ENCODE measurements at regions of chr7 and their contacts with region 1.

Region 1: DNA sequence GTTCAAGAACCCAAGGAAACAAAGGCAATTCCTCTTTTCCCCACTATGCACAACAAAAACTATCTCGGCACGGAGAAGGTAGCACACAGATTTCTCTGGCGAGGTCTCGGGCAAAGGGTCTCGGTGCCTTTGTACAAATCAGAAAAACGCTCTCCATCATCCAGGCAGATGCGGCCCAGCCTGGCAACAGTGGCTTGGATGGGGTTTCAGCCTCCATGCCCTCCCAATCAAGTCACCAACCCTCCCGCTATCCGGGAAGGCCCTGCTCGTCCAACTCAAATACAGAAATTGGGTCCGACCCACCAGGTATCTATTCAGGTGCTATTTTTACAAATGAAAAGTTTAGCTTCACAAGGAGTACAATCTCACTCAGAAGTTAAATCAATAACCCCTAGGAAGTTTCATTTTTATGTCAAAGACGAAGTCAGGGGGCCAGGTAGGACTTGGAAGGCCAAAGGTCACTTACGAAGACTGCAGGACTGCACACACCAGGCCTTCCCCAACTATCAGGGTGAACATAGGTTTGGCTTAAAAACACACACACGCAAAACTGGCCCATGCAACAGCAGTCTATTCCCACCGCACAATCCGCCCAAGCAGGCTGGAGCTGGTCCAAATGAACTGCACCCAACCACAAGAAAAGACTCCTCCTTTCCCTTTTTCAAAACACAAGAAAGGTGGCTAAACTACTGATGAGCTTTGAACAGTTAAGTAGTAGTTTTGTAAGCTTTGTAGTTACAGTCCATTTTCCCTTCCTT is 43.0 kb downstream of the GNA12 start:
- DNase-seq: peak; percentile 34
- ATAC-seq: no peak
- H3K4me3 ChIP-seq: peak overlapping the region in 2 of 3 experiments; percentile 2 to 25; a peak in 1 of 6 replicates
- H3K27ac ChIP-seq: peak overlapping the region; percentile 97
- H3K4me1 ChIP-seq: peaks cover 94% of the 10 kb centered on the region
- H3K27me3 ChIP-seq: no peaks in the 10 kb centered on the region
- CTCF ChIP-seq: no peak
- EP300 ChIP-seq: 0 out of 4 replicates have a peak, but pooled peaks of 1 of the 2 experiments have one; percentile 44
- POLR2A ChIP-seq: no peak
- RAD21 ChIP-seq: no peak

Region 2: DNA sequence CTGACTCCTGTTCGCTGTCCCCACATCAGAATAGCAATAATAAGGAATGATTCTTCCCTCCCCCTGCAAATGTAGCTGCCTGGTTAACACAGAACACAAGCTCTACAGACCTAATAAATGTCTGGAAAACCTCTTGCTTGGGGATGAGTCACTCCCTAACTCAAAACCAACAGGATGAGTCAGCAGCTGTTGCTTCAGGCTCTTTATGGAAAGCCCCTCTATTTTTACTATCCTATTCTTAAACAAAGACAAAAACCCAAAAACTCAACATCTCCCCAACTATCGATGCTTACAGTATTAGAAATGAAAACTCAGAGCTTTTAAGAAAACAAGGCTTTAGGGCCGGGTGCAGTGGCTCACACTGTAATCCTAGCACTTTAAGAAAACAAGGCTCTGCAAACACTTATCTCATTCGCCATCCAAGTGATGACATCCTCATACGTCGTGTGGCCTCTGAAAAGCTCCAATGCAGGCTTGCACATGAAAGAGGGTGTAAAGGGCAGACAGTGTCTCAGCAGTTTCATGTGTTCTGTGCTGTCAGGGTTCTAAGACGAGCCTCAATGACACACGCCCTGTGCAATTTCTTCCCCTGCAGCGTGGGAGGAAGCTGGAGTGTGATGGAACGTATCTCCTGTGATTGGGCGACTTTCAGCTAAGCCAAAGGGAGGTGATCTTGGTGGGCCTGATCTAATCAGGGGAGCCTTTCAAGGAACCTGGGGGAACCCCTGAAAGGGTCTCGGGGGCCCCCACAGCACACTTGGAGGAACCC is 43.0 kb before region 1 on chr7:
- CTCF ChIA-PET with region 1: no interaction called
- POLR2A ChIA-PET with region 1: interaction called, 23 read pairs
- in situ Hi-C with region 1: no loop called
- intact Hi-C with region 1: loop called (anchors 5 kb)
- DNase-seq: peak; percentile 90
- ATAC-seq: peak; percentile 70
- H3K4me3 ChIP-seq: no peak overlapping the region; a peak in 1 of 6 replicates
- H3K27ac ChIP-seq: peak overlapping the region; percentile 55
- H3K4me1 ChIP-seq: peaks cover 38% of the 10 kb centered on the region
- H3K27me3 ChIP-seq: no peaks in the 10 kb centered on the region
- CTCF ChIP-seq: no peak
- EP300 ChIP-seq: no peak
- POLR2A ChIP-seq: no peak
- RAD21 ChIP-seq: no peak

Region 3: GRCh38 chr7:2821161-2821841 is 20.2 kb after region 1 on chr7:
- CTCF ChIA-PET with region 1: no interaction called
- POLR2A ChIA-PET with region 1: interaction called, 54 read pairs
- in situ Hi-C with region 1: no loop called
- intact Hi-C with region 1: no loop called
- DNase-seq: no peak
- ATAC-seq: peak; percentile 64
- H3K4me3 ChIP-seq: no peak overlapping the region
- H3K27ac ChIP-seq: peak overlapping the region; percentile 76
- H3K4me1 ChIP-seq: peaks cover 96% of the 10 kb centered on the region
- H3K27me3 ChIP-seq: no peaks in the 10 kb centered on the region
- CTCF ChIP-seq: peak; percentile 34; the same call in 1 of the 2 replicates
- EP300 ChIP-seq: no peak
- POLR2A ChIP-seq: no peak
- RAD21 ChIP-seq: no peak

Region 4: GRCh38 chr7:2844165-2844898 is 43.2 kb after region 1 on chr7 and contains the start of gene GNA12:
- CTCF ChIA-PET with region 1: no interaction called
- POLR2A ChIA-PET with region 1: interaction called, 5 read pairs
- in situ Hi-C with region 1: no loop called
- intact Hi-C with region 1: loop called (anchors 1 kb)
- DNase-seq: peak; percentile 98
- ATAC-seq: peak; percentile 95
- H3K4me3 ChIP-seq: peak within 1 kb of the TSS; percentile 76 to 86 (median 86)
- H3K27ac ChIP-seq: peak within 1 kb of the TSS; percentile 72
- H3K4me1 ChIP-seq: peaks cover 65% of the 10 kb centered on the region
- H3K27me3 ChIP-seq: no peaks in the 10 kb centered on the region
- CTCF ChIP-seq: no peak
- EP300 ChIP-seq: no peak
- POLR2A ChIP-seq: peak; percentile 96
- RAD21 ChIP-seq: no peak
- total RNA-seq, gene GNA12: 16.2 and 23.3 TPM in 2 replicates

Region 5: GRCh38 chr7:2863461-2864066 is 62.5 kb after region 1 on chr7:
- CTCF ChIA-PET with region 1: no interaction called
- POLR2A ChIA-PET with region 1: interaction called, 20 read pairs
- in situ Hi-C with region 1: no loop called
- intact Hi-C with region 1: loop called (anchors 5 kb)
- DNase-seq: peak; percentile 89
- ATAC-seq: peak; percentile 97
- H3K4me3 ChIP-seq: peak overlapping the region; percentile 58 to 74 (median 60)
- H3K27ac ChIP-seq: peak overlapping the region; percentile 94
- H3K4me1 ChIP-seq: peaks cover 47% of the 10 kb centered on the region
- H3K27me3 ChIP-seq: no peaks in the 10 kb centered on the region
- CTCF ChIP-seq: 0 out of 2 replicates have a peak, but pooled peaks have one; percentile 30
- EP300 ChIP-seq: peak in 1 of 2 experiments; percentile 32; a peak in 1 of 4 replicates
- POLR2A ChIP-seq: peak; percentile 95 to 97
- RAD21 ChIP-seq: peak; percentile 22; the same call in 1 of the 2 replicates